Testis (tissue), 5 donors: ENCODE measurements at regions of chr2 and their contacts with region 1.

Region 1: DNA sequence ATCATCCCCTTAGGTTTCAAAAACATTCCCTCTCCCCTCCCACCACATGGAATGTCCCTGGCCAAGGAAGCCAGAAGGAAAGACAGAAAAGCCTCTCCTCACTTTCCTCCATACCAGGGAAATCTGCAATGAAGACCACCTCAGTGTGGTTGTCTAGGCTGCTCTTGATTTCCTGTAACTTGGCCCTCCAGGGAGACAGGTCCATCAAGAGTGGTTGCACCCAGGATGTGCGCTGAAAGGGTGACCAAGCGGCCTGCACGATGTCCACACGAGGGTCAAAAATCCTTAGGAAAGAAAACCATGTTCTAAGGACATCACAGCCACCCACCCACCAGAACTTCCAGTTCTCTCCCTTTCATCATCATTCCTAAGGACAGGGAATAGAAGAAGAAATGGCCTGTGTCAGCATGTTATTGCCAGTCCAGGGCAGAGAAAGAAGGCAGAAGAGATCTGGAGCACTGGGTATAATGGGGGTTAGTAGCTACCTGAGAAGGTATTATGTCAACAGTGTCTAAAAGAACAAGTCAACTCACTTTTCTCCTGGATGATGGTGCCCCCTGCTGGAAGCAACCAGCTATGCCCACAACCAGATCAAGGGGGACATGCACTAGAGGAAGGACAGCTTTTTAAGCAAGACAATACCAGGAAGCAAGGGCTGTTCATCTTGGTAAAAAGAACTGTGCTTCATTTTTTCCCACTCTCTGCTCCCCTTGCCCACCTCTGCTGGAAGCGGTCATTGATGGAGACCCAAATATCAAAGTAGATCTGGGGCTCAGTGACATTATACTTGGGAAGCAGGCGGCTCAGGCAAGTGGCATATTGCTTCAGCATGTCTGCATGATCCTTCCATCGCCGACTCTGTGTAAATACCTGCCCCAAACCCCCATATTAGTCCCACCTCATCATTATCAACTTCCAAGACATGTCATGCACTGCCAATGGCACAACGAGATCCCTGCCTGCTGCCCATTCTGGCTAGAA is 9.3 kb downstream of the GGCX start:
- DNase-seq: peak; percentile 84
- H3K4me3 ChIP-seq: no peak overlapping the region
- H3K27ac ChIP-seq: no peak overlapping the region
- H3K4me1 ChIP-seq: no peaks in the 10 kb centered on the region
- H3K27me3 ChIP-seq: no peaks in the 10 kb centered on the region
- CTCF ChIP-seq: peak; percentile 89 to 96 (median 92)
- POLR2A ChIP-seq: no peak

Region 2: GRCh38 chr2:85266146-85267041 is 285.6 kb before region 1 on chr2:
- intact Hi-C with region 1: no loop called
- DNase-seq: peak; percentile 80
- H3K4me3 ChIP-seq: no peak overlapping the region
- H3K27ac ChIP-seq: no peak overlapping the region
- H3K4me1 ChIP-seq: no peaks in the 10 kb centered on the region
- H3K27me3 ChIP-seq: no peaks in the 10 kb centered on the region
- CTCF ChIP-seq: peak; percentile 59 to 90 (median 59)
- POLR2A ChIP-seq: no peak

Region 3: DNA sequence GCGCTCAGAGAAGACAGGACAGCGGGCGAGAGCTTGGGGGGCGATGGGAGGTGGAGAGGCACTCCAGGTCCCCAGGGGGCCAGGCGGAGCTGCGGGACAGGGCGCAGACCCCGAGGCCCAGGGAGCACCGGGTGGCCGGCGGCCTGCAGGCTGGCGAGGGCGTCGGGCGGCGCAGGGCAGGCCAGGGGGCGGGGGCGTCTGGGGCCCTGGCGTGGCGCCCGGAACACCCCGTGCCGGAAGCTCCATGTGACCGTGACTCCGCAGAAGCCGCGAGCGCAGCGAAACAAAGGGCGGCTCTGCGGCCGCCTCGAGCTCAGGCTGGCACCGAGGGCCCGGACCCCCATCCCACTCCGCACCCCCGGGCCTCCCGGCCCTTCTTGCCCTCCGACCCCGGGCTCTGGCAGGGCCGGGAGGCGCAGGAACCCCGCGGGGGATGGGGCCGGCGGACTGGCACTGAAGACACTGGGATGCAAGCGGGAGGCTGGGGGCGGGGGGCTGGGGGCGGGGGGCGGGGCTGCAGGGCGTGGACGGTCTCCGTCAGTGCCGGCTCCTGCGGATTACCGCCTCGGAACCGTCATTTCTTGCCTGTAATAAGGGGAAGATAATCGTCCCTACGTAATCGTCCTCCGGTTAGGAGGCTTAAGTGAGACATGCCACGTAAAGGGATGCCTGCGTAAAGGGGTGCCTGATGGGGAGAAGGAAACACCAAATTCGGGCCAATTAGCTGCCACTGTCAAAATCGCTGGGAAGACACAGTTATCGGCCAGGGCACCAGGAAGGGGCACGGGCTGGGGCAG is 114.3 kb before region 1 on chr2:
- intact Hi-C with region 1: loop called (anchors 5 kb)
- DNase-seq: peak; percentile 88
- H3K4me3 ChIP-seq: peak overlapping the region; percentile 34 to 57
- H3K27ac ChIP-seq: peak overlapping the region; percentile 95 to 96
- H3K4me1 ChIP-seq: peaks cover 40% of the 10 kb centered on the region
- H3K27me3 ChIP-seq: no peaks in the 10 kb centered on the region
- CTCF ChIP-seq: peak in 1 of 3 experiments; percentile 5
- POLR2A ChIP-seq: peak; percentile 83

Region 4: DNA sequence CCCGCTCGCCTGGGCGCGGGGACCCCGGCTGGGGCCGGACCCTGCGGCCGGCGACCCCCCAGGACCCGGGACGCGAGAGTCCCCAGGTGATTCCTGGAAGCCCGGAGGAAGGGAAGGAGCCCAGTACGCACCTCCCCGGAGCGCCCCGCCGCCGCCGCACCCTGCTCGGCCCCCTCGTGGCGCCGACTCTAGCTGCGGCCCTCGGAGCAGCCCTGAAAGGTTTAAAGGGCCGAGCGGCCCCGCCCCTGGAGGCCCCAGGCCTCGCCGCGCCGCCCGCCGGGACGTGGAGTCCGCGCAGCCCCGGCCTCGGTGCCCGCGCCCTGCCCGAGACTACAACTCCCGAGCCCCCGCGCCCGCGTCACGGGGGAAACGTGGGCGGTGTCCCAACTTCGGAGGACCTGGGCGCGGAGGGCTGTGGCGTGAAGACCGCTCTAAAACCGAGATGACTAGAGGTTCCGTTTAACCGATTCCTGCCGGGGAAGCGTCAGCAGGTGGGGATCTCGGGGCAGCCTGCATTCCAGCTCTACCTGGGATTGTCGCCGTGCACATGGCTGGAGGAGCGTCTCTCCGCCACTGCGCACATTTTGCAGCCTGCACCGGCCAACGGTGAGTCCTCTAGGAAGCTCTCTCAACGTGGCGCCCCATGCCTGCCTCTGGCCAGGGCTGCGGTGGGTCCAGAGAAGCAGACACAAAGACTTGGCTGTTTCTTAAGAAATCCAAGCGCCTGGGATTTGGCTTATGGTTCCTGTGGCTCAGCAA is 50.7 kb after region 1 on chr2 and contains the start of gene TMEM150A:
- intact Hi-C with region 1: loop called (anchors 5 kb)
- DNase-seq: peak; percentile 95
- H3K4me3 ChIP-seq: peak within 1 kb of the TSS; percentile 77 to 91
- H3K27ac ChIP-seq: peak within 1 kb of the TSS; percentile 72 to 89
- H3K4me1 ChIP-seq: peaks cover 41% of the 10 kb centered on the region
- H3K27me3 ChIP-seq: no peaks in the 10 kb centered on the region
- CTCF ChIP-seq: peak in 1 of 3 experiments; percentile 21
- POLR2A ChIP-seq: no peak
- total RNA-seq, gene TMEM150A: 33.1 to 44.0 TPM